ENCODE measurements at regions of chr2 and their contacts with region 1.

Region 1: GRCh38 chr2:174039551-174040416 is 74.6 kb upstream of the SP3 start:
- DNase-seq: peak; percentile 78 to 87
- ATAC-seq: peak; percentile 81 to 84
- H3K4me3 ChIP-seq: peak overlapping the region in 3 of 4 donors; percentile 15 to 47 (median 34)
- H3K27ac ChIP-seq: peak overlapping the region; percentile 46 to 88 (median 77)
- H3K4me1 ChIP-seq: peaks cover 11 to 36% of the 10 kb centered on the region in 2 donors
- H3K27me3 ChIP-seq: no peaks in the 10 kb centered on the region
- CTCF ChIP-seq: peak; percentile 72 to 86 (median 82)
- POLR2A ChIP-seq: no peak

Region 2: DNA sequence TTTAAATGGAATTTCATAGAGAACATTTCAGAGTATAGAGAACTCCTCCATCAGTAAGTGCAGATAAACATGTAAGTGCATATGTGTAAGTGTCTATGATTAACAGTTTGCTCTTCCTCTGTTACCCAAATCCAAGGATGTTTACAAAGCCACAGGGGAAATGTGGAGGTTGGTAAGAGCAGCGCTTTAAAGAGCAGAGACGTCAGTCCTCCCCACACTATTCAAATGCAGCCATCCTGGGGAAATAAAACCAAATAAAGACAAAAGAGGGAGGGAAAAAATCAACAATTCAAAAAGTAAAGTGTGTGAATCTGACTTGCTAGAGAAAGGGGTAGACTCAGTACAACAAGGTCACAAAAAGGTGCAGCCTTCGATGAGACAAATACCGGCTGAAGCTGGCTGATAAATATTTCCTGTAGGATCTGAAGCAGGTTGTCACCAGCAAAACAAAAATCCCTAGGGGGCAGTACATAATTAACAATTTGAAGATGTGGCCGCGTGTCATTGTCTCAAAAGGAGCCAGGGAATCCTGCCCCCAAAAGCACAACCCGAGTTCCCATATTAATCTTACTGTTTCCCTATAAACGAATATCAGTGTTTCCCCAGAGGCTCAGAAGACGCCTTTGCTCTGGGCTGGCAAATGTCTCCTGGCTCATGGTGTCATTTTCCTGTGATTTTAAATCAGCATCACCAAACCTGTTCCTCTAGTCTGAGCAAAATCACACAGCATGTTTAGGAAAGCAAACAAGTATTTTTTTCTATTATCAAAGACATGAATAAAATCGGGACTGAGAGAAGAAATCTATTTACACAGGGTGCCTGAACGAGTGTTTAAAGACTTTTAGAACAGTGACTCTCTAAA is 468.5 kb before region 1 on chr2:
- in situ Hi-C with region 1: loop called in 2 of 4 experiments (anchors 25 kb)
- intact Hi-C with region 1: loop called (anchors 10 kb)
- DNase-seq: no peak
- ATAC-seq: peak in 1 of 2 donors; percentile 89
- H3K4me3 ChIP-seq: no peak overlapping the region
- H3K27ac ChIP-seq: no peak overlapping the region
- H3K4me1 ChIP-seq: peaks cover 4 to 6% of the 10 kb centered on the region in 2 donors
- H3K27me3 ChIP-seq: no peaks in the 10 kb centered on the region
- CTCF ChIP-seq: peak in 3 of 5 experiments; percentile 10 to 57 (median 34)
- POLR2A ChIP-seq: no peak

Region 3: GRCh38 chr2:173749315-173749714 is 290.5 kb before region 1 on chr2:
- in situ Hi-C with region 1: no loop called
- intact Hi-C with region 1: loop called (anchors 10 kb)
- DNase-seq: no peak
- ATAC-seq: no peak
- H3K4me3 ChIP-seq: no peak overlapping the region
- H3K27ac ChIP-seq: no peak overlapping the region
- H3K4me1 ChIP-seq: no peaks in the 10 kb centered on the region
- H3K27me3 ChIP-seq: no peaks in the 10 kb centered on the region
- CTCF ChIP-seq: no peak
- POLR2A ChIP-seq: no peak

Region 4: GRCh38 chr2:173965329-173966025 is 74.3 kb before region 1 on chr2 and contains the start of gene SP3:
- in situ Hi-C with region 1: loop called in 2 of 4 experiments (anchors 5 to 10 kb)
- intact Hi-C with region 1: loop called (anchors 1 kb)
- DNase-seq: peak; percentile 97
- ATAC-seq: peak; percentile 78 to 80
- H3K4me3 ChIP-seq: peak within 1 kb of the TSS; percentile 92 to 98 (median 94)
- H3K27ac ChIP-seq: peak within 1 kb of the TSS; percentile 98 to 100 (median 98)
- H3K4me1 ChIP-seq: peaks cover 32 to 35% of the 10 kb centered on the region in 2 donors
- H3K27me3 ChIP-seq: no peaks in the 10 kb centered on the region
- CTCF ChIP-seq: peak in 3 of 5 experiments; percentile 7 to 18 (median 16)
- POLR2A ChIP-seq: peak; percentile 91 to 95
- total RNA-seq, gene SP3: 47.9 to 68.9 (median 58.7) TPM